ENCODE measurements at regions of chr13 and their contacts with region 1.

Region 1: DNA sequence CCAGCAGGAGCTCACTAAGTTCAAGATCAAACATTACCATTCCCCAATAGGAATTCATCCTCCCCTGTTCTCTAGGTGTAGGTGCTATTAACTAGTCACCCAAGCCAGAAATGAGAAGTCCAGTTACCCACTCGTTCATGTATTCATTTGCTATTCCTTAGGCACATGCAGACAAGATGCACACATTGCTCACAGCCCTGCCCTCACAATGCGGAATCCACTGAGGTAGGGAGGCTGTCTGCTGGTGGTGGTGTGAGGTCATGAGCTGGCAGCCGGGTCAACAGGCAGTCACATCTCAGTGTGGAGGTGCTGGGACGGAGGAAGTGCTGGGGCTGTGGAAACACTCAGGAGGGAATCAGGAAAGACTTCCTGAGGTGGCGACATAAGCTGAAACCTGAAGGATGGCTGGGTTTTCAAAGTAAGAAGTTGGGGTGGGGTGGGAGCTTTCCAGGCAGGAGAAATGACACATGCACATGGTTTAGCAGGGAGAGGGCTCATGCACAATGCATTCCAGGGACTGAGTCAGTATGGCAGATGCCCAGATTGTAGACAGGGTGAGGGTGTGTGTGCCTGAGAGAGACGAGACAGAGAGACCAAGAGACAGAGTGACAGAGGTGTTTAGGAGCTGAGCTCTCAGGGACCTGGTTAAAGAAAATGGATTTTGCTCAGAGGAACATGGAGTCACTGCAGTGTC is 117.6 kb downstream of the USP12 start:
- DNase-seq: peak; percentile 66 to 95
- H3K4me3 ChIP-seq: no peak overlapping the region; the same call in 1 of the 2 replicates
- H3K27ac ChIP-seq: peak overlapping the region; percentile 83
- H3K4me1 ChIP-seq: peaks cover 45% of the 10 kb centered on the region
- H3K27me3 ChIP-seq: no peaks in the 10 kb centered on the region
- CTCF ChIP-seq: no peak

Region 2: GRCh38 chr13:26695891-26696311 is 358.1 kb before region 1 on chr13:
- CTCF ChIA-PET with region 1: no interaction called
- POLR2A ChIA-PET with region 1: no interaction called
- intact Hi-C with region 1: no loop called
- DNase-seq: no peak
- H3K4me3 ChIP-seq: no peak overlapping the region
- H3K27ac ChIP-seq: no peak overlapping the region
- H3K4me1 ChIP-seq: no peaks in the 10 kb centered on the region
- H3K27me3 ChIP-seq: no peaks in the 10 kb centered on the region
- CTCF ChIP-seq: no peak

Region 3: DNA sequence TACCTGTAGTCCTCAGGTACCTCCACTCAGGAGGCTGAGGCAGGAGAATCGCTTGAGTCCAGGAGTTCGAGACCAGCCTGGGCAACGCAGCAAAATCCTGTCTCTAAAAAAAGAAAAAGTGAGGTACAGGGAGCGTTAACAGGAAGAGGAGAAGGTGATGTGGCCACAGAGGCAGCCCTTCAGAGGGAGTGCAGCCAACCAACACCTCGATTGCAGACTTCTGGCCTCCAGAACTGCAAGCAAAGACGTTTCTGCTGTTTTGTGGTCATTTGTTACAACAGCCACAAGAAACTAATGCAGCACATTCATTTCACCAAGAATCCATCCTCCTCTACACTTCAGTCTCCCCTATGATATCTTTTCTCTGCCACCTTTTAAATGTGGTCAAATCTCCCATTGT is 27.7 kb before region 1 on chr13:
- CTCF ChIA-PET with region 1: no interaction called
- POLR2A ChIA-PET with region 1: interaction called, 11 read pairs
- intact Hi-C with region 1: no loop called
- DNase-seq: no peak
- H3K4me3 ChIP-seq: no peak overlapping the region
- H3K27ac ChIP-seq: no peak overlapping the region
- H3K4me1 ChIP-seq: peaks cover 34% of the 10 kb centered on the region
- H3K27me3 ChIP-seq: no peaks in the 10 kb centered on the region
- CTCF ChIP-seq: no peak

Region 4: GRCh38 chr13:27097691-27098090 is 43.6 kb after region 1 on chr13:
- CTCF ChIA-PET with region 1: no interaction called
- POLR2A ChIA-PET with region 1: no interaction called
- intact Hi-C with region 1: no loop called
- DNase-seq: no peak
- H3K4me3 ChIP-seq: no peak overlapping the region
- H3K27ac ChIP-seq: no peak overlapping the region
- H3K4me1 ChIP-seq: no peaks in the 10 kb centered on the region
- H3K27me3 ChIP-seq: no peaks in the 10 kb centered on the region
- CTCF ChIP-seq: no peak

Region 5: GRCh38 chr13:27137759-27138158 is 83.7 kb after region 1 on chr13:
- CTCF ChIA-PET with region 1: no interaction called
- POLR2A ChIA-PET with region 1: no interaction called
- intact Hi-C with region 1: no loop called
- DNase-seq: no peak
- H3K4me3 ChIP-seq: no peak overlapping the region
- H3K27ac ChIP-seq: no peak overlapping the region
- H3K4me1 ChIP-seq: no peaks in the 10 kb centered on the region
- H3K27me3 ChIP-seq: no peaks in the 10 kb centered on the region
- CTCF ChIP-seq: no peak

Region 6: DNA sequence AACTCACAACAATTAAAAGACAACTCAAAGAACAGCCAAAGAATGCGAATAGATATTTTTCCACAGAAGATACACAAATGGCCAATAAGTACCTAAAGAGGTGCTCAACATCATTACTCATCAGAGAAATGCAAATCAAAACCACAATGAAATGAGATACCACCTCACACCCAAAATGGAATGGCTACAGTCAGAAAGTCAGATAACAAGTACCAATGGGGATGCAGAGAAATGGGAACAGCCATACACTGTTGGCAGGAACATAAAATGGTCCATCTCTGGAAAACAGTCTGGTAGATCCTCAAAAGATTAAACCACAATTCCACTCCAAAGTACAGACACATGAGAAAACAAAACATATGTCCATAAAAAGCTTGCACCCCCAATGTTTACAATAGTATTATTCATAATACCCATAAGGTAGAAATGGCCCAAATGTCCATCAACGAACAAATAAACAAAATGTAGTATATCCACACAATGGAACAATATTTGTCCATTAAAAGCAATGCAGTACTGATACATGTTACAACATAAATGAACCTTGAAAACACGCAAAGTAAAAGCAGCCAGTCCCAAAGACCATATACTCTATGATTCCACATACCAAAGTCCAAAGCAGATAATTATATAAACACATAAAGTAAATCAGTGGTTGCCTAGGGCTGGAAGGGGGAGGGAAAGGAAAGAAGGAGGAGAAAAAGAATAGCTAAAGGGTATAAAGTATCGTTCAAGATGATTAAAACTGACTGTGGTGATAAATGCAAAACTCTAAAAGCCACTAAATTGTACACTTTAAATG is 98.0 kb after region 1 on chr13:
- CTCF ChIA-PET with region 1: no interaction called
- POLR2A ChIA-PET with region 1: no interaction called
- intact Hi-C with region 1: loop called (anchors 5 kb)
- DNase-seq: no peak
- H3K4me3 ChIP-seq: no peak overlapping the region
- H3K27ac ChIP-seq: no peak overlapping the region
- H3K4me1 ChIP-seq: 0 out of 2 replicates have a peak, but pooled peaks cover 5% of the 10 kb centered on the region
- H3K27me3 ChIP-seq: no peaks in the 10 kb centered on the region
- CTCF ChIP-seq: no peak

Region 7: GRCh38 chr13:29005763-29006120 is 1951.7 kb after region 1 on chr13:
- CTCF ChIA-PET with region 1: no interaction called
- POLR2A ChIA-PET with region 1: no interaction called
- intact Hi-C with region 1: no loop called
- DNase-seq: no peak
- H3K4me3 ChIP-seq: no peak overlapping the region
- H3K27ac ChIP-seq: no peak overlapping the region
- H3K4me1 ChIP-seq: no peaks in the 10 kb centered on the region
- H3K27me3 ChIP-seq: peaks cover 27% of the 10 kb centered on the region
- CTCF ChIP-seq: no peak